Activated CD4-positive, alpha-beta T cell treated with anti-CD3 and anti-CD28 coated beads for 36 hours (primary cell): ENCODE measurements at regions of chr1 and their contacts with region 1.

Region 1: DNA sequence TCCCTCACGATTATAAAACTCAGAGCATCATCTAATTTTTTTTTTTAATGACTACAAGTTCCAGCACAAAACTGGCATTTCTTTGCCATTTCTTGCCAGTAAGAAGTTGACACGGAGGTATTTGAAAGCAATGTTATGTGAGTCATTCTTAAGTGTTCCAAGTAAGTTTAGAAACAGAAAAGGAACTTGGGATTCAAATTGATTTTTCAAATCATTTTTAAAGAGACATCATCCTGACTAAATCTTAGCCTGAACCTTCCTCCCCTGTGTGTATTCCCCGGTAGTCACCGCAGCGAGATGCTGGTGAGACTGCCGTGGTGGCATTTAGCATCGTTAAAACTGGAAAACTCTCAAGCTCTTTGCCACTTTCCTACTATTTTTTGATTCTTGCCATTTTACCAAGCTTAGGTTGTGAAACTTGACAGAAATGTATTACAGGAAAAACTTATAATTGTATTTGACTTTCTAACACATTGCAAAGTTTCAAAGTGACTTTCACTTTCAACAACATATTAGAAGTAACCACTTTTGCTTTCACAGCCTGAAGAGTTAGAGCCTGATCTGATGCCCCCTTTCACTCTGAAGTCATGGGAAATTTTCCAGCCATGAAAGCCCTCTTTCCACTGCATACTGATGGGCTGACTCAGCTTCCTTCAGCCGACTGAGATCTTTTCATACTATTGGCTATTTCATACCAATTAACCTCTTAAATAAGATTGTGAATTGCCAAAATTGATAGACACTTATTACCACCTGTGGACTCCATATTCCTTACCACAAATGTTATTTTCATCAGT is 61.4 kb downstream of the OLFML2B start:
- DNase-seq: peak; percentile 69
- ATAC-seq: peak; percentile 96
- H3K4me3 Mint-ChIP-seq: peak overlapping the region; percentile 57
- H3K27ac Mint-ChIP-seq: peak overlapping the region; percentile 95
- H3K4me1 Mint-ChIP-seq: peaks cover 59% of the 10 kb centered on the region
- H3K27me3 Mint-ChIP-seq: no peaks in the 10 kb centered on the region

Region 2: GRCh38 chr1:161902182-161902581 is 60.1 kb before region 1 on chr1:
- CTCF ChIA-PET with region 1: no interaction called
- POLR2A ChIA-PET with region 1: no interaction called
- intact Hi-C with region 1: no loop called
- DNase-seq: no peak
- ATAC-seq: no peak
- H3K4me3 Mint-ChIP-seq: no peak overlapping the region
- H3K27ac Mint-ChIP-seq: no peak overlapping the region
- H3K4me1 Mint-ChIP-seq: peaks cover 15% of the 10 kb centered on the region
- H3K27me3 Mint-ChIP-seq: no peaks in the 10 kb centered on the region

Region 3: GRCh38 chr1:161915051-161915503 is 47.2 kb before region 1 on chr1:
- CTCF ChIA-PET with region 1: interaction called, 4 read pairs
- POLR2A ChIA-PET with region 1: no interaction called
- intact Hi-C with region 1: loop called (anchors 1 kb)
- DNase-seq: peak; percentile 73
- ATAC-seq: peak; percentile 82
- H3K4me3 Mint-ChIP-seq: no peak overlapping the region
- H3K27ac Mint-ChIP-seq: no peak overlapping the region
- H3K4me1 Mint-ChIP-seq: peaks cover 34% of the 10 kb centered on the region
- H3K27me3 Mint-ChIP-seq: no peaks in the 10 kb centered on the region

Region 4: GRCh38 chr1:161933592-161934588 is 28.4 kb before region 1 on chr1:
- CTCF ChIA-PET with region 1: interaction called, 3 read pairs
- POLR2A ChIA-PET with region 1: no interaction called
- intact Hi-C with region 1: loop called in 1 of 2 experiments (anchors 1 kb)
- DNase-seq: no peak
- ATAC-seq: peak; percentile 81
- H3K4me3 Mint-ChIP-seq: peak overlapping the region; percentile 2
- H3K27ac Mint-ChIP-seq: peak overlapping the region; percentile 84
- H3K4me1 Mint-ChIP-seq: peaks cover 52% of the 10 kb centered on the region
- H3K27me3 Mint-ChIP-seq: no peaks in the 10 kb centered on the region

Region 5: GRCh38 chr1:161946071-161946987 is 16.0 kb before region 1 on chr1:
- CTCF ChIA-PET with region 1: no interaction called
- POLR2A ChIA-PET with region 1: no interaction called
- intact Hi-C with region 1: no loop called
- DNase-seq: no peak
- ATAC-seq: no peak
- H3K4me3 Mint-ChIP-seq: no peak overlapping the region
- H3K27ac Mint-ChIP-seq: no peak overlapping the region
- H3K4me1 Mint-ChIP-seq: no peaks in the 10 kb centered on the region
- H3K27me3 Mint-ChIP-seq: no peaks in the 10 kb centered on the region

Region 6: DNA sequence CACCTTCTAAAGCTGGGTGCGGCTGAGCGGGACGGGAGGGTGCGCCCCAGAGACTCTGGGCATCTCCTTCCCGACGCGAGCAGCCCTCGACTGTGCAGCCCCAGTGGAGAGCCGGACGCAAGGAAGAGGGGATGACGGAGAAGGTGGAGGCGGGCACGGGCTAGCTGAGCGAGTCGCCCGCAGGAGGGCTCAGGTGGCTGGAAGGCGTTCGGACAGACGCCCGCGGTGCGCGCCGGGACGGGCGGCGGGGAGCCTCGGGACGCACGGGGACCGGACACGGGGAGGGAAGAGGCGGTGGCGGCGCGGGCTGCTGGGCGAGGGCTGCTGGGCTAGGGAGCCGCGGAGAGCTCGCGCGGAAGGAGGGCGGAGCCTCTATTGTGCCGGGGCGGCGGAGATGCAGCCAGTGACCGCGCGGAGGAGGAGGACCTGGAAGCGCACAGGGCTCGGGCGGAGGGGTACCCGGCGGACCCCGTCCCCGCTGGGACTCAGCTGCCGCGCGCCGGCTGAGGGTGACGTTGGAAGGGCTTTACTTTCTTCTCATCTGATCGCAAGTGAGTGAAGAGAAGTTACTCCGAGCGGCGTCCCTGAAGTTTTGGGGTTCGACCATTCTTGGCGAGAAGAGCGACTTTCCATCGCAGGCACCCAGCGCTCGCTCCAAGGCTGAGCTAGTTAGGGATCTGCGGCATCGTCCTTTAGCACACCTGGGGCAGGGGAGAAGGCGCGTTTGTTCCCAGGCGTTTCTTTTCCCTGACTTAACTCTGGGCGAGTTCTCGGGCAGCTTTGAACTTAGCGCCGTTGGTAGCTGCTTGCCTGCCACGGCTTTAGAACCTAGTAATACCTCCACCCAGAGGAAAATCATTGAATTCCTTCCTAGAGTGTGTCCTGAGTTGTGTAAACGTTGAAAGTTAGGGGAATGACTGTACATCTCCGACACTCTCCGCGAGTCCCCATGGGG is 61.5 kb after region 1 on chr1 and contains the start of gene OLFML2B:
- CTCF ChIA-PET with region 1: no interaction called
- POLR2A ChIA-PET with region 1: no interaction called
- intact Hi-C with region 1: loop called in 1 of 2 experiments (anchors 5 kb)
- DNase-seq: peak; percentile 70
- ATAC-seq: peak; percentile 91
- H3K4me3 Mint-ChIP-seq: peak within 1 kb of the TSS; percentile 78
- H3K27ac Mint-ChIP-seq: peak within 1 kb of the TSS; percentile 40
- H3K4me1 Mint-ChIP-seq: peaks cover 4% of the 10 kb centered on the region
- H3K27me3 Mint-ChIP-seq: peaks cover 39% of the 10 kb centered on the region
- total RNA-seq, gene OLFML2B: 0.14 to 0.28 TPM